WTC11 (cell line): ENCODE measurements at regions of chr17 and their contacts with region 1.

Region 1: DNA sequence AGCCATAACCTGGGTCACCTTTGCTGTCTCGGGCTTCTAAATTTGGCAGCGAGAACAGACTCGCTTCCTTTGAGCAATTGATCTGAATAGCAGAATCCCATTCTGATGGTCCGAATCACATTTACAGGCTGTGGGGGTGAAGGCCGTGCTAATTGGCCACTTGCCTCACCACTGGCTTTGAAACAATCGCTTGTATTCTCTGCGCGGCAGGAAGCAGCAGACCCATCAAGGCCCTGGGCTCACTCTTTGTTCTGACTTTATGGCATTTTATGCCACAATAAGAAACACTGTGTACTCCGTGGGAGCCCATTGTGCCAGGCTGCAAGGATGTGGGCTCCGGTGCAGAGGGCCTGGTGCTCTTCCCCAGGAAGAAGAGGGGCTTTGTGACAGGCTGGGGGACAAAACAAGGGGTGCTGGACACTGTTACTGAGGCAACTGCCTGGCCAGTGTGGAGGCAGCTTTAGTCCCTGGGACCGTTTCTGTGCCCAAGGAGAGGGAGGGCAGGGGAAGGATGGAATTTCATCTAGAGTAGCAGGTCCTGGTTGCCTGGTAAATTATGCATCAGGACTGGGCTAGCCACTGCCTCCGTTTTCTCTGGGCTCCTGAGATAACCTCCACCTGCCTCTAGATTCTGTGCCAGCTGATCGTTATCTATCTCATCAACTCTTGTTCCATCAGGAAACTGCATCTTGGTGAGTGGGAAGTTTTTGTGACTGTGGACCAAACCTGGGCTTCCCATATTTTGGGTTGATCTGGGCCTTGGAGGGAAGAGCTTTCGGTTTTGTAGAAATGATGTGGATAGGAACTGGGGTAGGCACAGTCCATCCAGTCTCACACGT is 78.5 kb downstream of the MRC2 start:
- DNase-seq: no peak
- ATAC-seq: peak; percentile 57
- H3K4me3 Mint-ChIP-seq: peak overlapping the region; percentile 80
- H3K27ac Mint-ChIP-seq: peak overlapping the region; percentile 89
- H3K4me1 Mint-ChIP-seq: peaks cover 30% of the 10 kb centered on the region
- H3K27me3 Mint-ChIP-seq: peaks cover 15% of the 10 kb centered on the region
- CTCF ChIP-seq: no peak

Region 2: DNA sequence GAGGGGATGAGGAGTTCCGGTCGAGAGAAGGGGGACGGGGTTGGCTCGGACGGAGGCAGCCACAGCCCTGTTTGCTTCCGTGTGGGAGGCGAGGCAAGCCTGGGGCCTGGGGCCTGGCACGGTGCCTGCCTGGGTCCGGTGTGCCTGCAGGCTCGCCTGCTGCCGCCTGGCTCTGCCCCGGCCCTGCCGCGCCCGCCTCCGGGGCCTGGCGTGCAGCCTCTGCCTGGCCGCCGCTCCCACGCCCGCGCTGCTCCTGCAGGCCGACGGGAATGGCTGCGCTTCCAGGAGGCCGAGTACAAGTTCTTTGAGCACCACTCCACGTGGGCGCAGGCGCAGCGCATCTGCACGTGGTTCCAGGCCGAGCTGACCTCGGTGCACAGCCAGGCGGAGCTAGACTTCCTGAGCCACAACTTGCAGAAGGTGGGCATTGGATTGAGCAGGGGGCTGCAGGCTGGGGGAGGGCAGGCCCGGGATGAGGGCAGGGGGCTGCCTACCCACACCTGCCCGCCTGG is 25.4 kb before region 1 on chr17:
- CTCF ChIA-PET with region 1: no interaction called
- POLR2A ChIA-PET with region 1: interaction called, 10 read pairs
- DNase-seq: no peak
- ATAC-seq: peak; percentile 43
- H3K4me3 Mint-ChIP-seq: no peak overlapping the region
- H3K27ac Mint-ChIP-seq: no peak overlapping the region; the same call in 1 of the 2 replicates
- H3K4me1 Mint-ChIP-seq: no peaks in the 10 kb centered on the region
- H3K27me3 Mint-ChIP-seq: no peaks in the 10 kb centered on the region
- CTCF ChIP-seq: no peak

Region 3: DNA sequence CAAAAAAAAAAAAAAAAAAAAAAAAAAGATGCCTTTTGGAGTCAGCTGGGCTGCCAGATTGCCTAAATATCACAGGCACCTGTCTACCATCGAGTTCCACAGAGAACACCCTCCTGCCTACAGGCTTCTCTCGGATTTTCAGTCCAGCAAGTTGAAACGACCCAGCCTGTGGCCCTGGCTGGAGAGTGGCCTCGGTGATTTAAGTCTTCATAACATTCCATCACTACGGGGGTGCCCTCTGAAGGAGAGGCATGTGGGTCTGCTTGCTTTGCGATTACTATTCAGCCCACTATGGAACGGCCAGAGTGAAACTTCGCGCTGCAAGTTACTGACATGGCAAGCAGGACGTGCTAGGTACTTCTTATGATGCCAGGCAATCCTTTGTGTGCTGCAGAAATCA is 59.4 kb after region 1 on chr17:
- CTCF ChIA-PET with region 1: no interaction called
- POLR2A ChIA-PET with region 1: no interaction called
- DNase-seq: no peak
- ATAC-seq: no peak; the same call in 1 of the 2 replicates
- H3K4me3 Mint-ChIP-seq: no peak overlapping the region
- H3K27ac Mint-ChIP-seq: no peak overlapping the region; the same call in 1 of the 2 replicates
- H3K4me1 Mint-ChIP-seq: peaks cover 26% of the 10 kb centered on the region
- H3K27me3 Mint-ChIP-seq: peaks cover 3% of the 10 kb centered on the region; the same call in 1 of the 2 replicates
- CTCF ChIP-seq: no peak

Region 4: DNA sequence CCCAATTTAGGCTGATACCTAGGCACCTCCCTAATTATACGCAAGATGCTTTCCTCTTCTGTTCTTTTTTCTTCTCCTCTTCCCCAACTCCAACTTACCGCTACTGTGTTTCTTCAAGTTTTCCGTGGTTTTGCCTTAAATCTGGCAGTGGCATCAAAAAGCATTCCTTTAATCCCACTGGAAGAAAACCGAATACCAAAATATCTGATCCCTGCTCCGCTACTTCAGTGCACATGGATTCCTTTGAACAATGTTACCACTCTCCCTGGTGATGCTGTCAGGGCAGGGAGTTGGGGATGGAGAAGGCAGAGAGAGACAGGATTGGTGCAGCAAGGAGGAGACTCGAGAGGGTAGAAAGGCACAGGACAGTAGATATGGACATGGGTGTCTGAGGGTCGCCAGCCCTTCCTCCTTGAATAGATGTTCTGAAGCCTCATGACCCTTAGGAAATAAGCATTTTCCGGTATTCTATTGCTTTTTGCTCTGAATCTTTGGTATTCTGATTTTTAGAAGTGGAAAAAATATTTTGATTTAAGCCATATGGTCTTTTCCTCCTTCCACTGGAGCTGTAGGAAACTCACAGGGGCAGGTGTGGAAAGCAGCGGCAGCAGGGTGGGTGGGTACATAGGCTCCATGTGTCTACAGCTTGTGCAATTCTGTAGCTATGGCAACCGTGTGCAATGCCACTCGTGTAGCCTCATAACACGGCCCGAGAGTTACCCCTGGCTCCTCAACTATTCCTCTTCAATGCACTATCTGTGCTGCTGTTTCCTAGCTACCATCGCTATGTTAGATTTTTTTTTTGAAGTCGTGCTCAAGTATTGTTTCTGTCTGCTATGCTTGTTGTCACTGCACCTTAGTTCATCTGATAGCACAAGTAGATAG is 227.7 kb after region 1 on chr17:
- CTCF ChIA-PET with region 1: no interaction called
- POLR2A ChIA-PET with region 1: no interaction called
- DNase-seq: no peak
- ATAC-seq: no peak
- H3K4me3 Mint-ChIP-seq: no peak overlapping the region
- H3K27ac Mint-ChIP-seq: no peak overlapping the region
- H3K4me1 Mint-ChIP-seq: peaks cover 3% of the 10 kb centered on the region
- H3K27me3 Mint-ChIP-seq: no peaks in the 10 kb centered on the region
- CTCF ChIP-seq: no peak